Upper lobe of right lung (tissue), 1 donor: ENCODE measurements at regions of chr22 and their contacts with region 1.

Region 1: DNA sequence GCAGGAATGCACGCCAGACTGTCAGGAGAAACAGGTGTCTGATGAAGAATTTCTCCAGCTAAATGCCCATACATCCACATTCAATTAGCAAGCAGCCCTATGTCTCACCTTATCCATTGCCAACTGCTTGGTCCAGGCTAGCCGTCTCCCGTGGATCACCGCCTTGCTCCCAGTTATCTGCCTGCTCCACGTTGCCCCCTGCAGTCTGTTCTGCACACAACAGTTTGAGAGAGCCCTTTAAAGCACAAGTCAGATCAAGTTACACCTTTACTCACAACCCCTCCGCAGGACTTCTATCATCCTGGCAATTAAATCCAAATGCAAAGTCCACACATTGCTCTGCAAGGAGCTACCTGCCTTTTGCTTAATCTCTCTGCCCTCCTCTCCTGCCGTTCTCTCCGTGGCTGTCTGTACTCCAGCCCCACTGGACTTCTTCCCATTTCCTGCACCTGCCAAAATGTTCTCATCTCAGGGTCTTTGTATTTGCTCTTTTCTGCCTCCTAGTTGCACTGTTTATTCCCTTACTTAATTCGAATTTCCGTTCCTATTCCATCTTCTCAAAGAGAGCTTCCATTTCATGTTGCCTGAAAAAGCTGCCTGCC is 185.3 kb upstream of the LARGE1 start:
- DNase-seq: peak; percentile 72
- ATAC-seq: peak; percentile 89
- H3K4me3 ChIP-seq: no peak overlapping the region
- H3K27ac ChIP-seq: no peak overlapping the region
- H3K4me1 ChIP-seq: no peaks in the 10 kb centered on the region
- H3K27me3 ChIP-seq: peaks cover 8% of the 10 kb centered on the region
- CTCF ChIP-seq: peak; percentile 70

Region 2: GRCh38 chr22:33920927-33921524 is 184.5 kb before region 1 on chr22:
- intact Hi-C with region 1: loop called (anchors 5 kb)
- DNase-seq: peak; percentile 99
- ATAC-seq: peak; percentile 95
- H3K4me3 ChIP-seq: peak overlapping the region; percentile 65
- H3K27ac ChIP-seq: peak overlapping the region; percentile 49
- H3K4me1 ChIP-seq: peaks cover 16% of the 10 kb centered on the region
- H3K27me3 ChIP-seq: no peaks in the 10 kb centered on the region
- CTCF ChIP-seq: no peak

Region 3: GRCh38 chr22:34198976-34199375 is 93.4 kb after region 1 on chr22:
- intact Hi-C with region 1: no loop called
- DNase-seq: no peak
- ATAC-seq: no peak
- H3K4me3 ChIP-seq: no peak overlapping the region
- H3K27ac ChIP-seq: no peak overlapping the region
- H3K4me1 ChIP-seq: no peaks in the 10 kb centered on the region
- H3K27me3 ChIP-seq: no peaks in the 10 kb centered on the region
- CTCF ChIP-seq: no peak